ENCODE measurements at regions of chr1 and their contacts with region 1.

Region 1: GRCh38 chr1:47584249-47584648 is 146.4 kb downstream of the FOXD2 start:
- DNase-seq: peak; percentile 39 to 88
- H3K4me3 ChIP-seq: no peak overlapping the region
- H3K27ac ChIP-seq: peak overlapping the region; percentile 16 to 43
- H3K4me1 ChIP-seq: peaks cover 14 to 40% of the 10 kb centered on the region in 2 donors
- H3K27me3 ChIP-seq: no peaks in the 10 kb centered on the region
- CTCF ChIP-seq: no peak

Region 2: DNA sequence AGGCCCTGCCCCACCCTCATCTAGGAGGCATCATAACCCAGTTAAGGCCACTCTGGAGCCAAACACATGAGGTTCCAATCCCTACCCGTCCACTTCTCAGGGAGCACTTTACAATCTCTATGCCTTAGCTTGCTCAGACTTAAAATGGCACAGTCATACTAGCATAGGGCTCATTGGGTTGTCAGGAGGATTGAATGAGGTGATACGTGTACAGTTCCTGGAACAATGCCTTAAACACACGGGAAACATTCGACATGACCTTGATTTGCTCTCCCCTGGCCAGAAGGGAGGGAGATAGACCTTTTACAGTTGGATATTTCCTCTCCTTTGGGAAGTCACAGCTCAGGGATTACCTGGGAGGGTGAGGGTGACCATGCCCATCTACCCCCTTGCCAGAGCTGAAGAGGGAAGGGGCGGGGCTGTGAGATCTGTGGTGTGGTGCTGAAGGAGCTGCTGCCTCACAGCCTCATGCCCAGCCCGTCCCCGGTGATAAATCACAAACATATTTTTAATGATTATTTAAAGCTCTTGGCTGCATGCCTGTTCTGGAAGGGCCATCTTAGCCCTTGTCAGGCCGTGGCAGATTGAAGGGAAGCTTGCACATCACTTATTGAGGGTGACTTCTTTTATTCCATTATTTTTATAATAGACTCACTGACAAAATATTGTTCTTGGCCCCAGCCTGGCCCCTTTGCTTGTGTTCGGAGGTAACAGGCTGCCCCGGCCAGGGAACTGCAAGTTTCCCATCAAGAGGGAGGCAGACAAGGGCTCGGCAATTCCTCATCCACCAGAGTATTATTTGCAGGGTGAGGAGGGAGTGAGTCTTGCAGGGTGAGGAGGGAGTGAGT is 63.0 kb before region 1 on chr1:
- intact Hi-C with region 1: loop called (anchors 2 kb)
- DNase-seq: peak; percentile 67 to 92
- H3K4me3 ChIP-seq: no peak overlapping the region
- H3K27ac ChIP-seq: peak overlapping the region; percentile 83 to 90
- H3K4me1 ChIP-seq: peaks cover 4 to 26% of the 10 kb centered on the region in 2 donors
- H3K27me3 ChIP-seq: no peaks in the 10 kb centered on the region
- CTCF ChIP-seq: no peak

Measured in ascending aorta (tissue), 2 donors.